GM13976 (cell line): ENCODE measurements at regions of chr11 and their contacts with region 1.

Region 1: DNA sequence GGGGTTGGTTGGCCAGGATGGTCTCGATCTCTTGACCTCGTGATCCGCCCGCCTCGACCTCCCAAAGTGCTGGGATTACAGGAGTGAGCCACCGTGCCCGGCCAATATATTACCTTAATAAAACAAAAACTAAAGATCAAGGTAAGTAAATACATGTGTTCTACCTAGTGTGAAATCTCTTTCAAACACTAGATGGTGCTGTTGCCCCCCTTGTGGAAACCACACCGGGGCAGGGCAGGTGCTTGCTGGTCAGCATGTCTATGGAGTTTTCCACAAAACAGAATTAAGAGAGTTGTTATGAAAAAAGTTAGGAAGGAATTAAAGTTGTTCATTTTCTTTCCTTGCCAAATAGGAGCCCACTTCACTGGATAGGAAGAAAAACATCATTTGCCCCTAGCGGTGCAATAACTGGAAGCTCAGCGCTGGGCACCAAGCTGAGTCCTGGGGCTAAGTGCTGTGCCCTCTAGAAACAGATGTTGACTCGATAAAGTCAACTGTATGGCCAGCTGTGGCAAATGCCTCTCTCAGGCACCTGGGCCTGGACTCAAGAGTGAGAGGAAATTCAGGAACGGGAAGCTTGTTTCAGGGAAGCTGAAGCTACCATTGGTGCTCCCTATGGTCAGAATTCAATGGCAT is 6.3 kb upstream of the KCNJ5 start:
- DNase-seq: peak; percentile 76
- CTCF ChIP-seq: peak; percentile 59

Region 2: GRCh38 chr11:128949791-128950454 is 65.1 kb after region 1 on chr11:
- in situ Hi-C with region 1: loop called (anchors 5 kb)
- DNase-seq: no peak
- CTCF ChIP-seq: no peak

Region 3: DNA sequence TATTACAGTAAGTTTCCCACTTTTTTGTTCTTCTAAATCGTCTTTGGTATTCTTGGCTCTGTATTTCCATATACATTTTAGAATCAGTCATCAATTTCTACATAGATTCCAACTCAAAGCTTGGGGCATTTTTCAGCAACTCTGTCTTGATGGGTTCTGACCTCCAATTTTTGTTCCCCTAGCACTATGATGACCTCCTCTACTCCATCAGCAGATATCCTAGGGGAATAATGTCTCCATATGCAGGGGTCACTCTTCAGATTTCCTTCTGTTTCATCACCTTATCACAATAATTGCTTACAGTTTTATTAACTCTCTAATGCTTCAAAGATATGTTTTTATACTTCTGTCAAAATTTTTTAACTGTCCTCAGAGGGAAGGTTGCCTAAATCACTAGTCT is 149.2 kb after region 1 on chr11:
- in situ Hi-C with region 1: no loop called
- DNase-seq: no peak
- CTCF ChIP-seq: no peak

Region 4: GRCh38 chr11:129331871-129332274 is 447.1 kb after region 1 on chr11:
- in situ Hi-C with region 1: loop called (anchors 25 kb)
- DNase-seq: peak; percentile 59
- CTCF ChIP-seq: peak; percentile 67